ENCODE measurements at regions of chrX and their contacts with region 1.

Region 1: DNA sequence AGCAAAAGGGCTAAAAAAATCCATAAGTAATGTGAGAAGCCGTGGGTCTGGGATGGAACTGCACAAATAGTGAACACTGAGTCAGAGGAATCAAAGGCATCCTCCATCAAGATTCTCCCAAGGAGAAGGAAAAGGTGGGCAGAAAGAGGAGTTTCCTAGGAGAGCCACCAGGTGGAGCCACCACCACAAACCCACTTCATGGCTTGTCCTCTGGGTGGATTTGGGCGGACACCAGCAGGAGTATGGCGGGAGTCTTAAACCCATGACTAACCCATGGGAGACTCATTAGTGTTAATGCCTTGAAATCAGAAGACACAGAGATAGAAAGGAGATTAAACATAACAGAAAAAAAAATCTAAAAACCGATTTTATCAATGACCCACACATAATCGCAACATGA is 147.7 kb downstream of the SH3KBP1 start:
- DNase-seq: peak; percentile 73
- ATAC-seq: peak; percentile 83
- H3K4me3 ChIP-seq: no peak overlapping the region
- H3K27ac ChIP-seq: no peak overlapping the region
- H3K4me1 ChIP-seq: no peaks in the 10 kb centered on the region
- H3K27me3 ChIP-seq: no peaks in the 10 kb centered on the region
- CTCF ChIP-seq: peak; percentile 72
- POLR2A ChIP-seq: no peak
- RAD21 ChIP-seq: peak; percentile 76

Region 2: GRCh38 chrX:19358526-19358925 is 381.2 kb before region 1 on chrX:
- CTCF ChIA-PET with region 1: no interaction called
- POLR2A ChIA-PET with region 1: no interaction called
- dilution Hi-C with region 1: no loop called
- in situ Hi-C with region 1: no loop called
- intact Hi-C with region 1: no loop called
- DNase-seq: no peak
- ATAC-seq: no peak
- H3K4me3 ChIP-seq: no peak overlapping the region
- H3K27ac ChIP-seq: no peak overlapping the region
- H3K4me1 ChIP-seq: no peaks in the 10 kb centered on the region
- H3K27me3 ChIP-seq: no peaks in the 10 kb centered on the region
- CTCF ChIP-seq: no peak
- POLR2A ChIP-seq: no peak
- RAD21 ChIP-seq: no peak

Region 3: DNA sequence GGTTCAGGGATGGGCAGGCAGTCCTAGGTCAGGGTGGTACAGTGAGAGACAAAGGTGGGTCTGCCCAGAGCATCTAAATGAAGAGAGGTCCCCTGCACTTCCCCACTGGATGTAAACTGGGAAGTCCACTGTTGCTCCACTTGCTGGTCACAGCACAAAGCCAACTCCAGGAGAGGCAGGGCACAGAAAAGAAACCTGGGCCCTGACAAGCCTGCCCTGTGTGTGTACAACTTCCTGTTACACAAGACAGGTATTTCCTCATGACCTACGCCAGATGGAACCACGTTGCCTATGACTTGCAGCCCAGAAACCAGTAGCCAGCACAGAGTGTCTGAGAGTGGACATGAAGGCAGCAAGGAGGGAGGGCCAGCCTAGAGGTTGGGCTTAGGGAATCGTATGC is 14.0 kb before region 1 on chrX:
- CTCF ChIA-PET with region 1: no interaction called
- POLR2A ChIA-PET with region 1: no interaction called
- dilution Hi-C with region 1: no loop called
- in situ Hi-C with region 1: no loop called
- intact Hi-C with region 1: no loop called
- DNase-seq: peak; percentile 12
- ATAC-seq: no peak
- H3K4me3 ChIP-seq: no peak overlapping the region
- H3K27ac ChIP-seq: no peak overlapping the region
- H3K4me1 ChIP-seq: peaks cover 3% of the 10 kb centered on the region; the same call in 1 of the 2 replicates
- H3K27me3 ChIP-seq: no peaks in the 10 kb centered on the region
- CTCF ChIP-seq: no peak
- POLR2A ChIP-seq: no peak
- RAD21 ChIP-seq: no peak

Region 4: GRCh38 chrX:19791562-19791961 is 51.9 kb after region 1 on chrX:
- CTCF ChIA-PET with region 1: no interaction called
- POLR2A ChIA-PET with region 1: interaction called, 12 read pairs
- dilution Hi-C with region 1: no loop called
- in situ Hi-C with region 1: no loop called
- intact Hi-C with region 1: no loop called
- DNase-seq: peak; percentile 25
- ATAC-seq: no peak
- H3K4me3 ChIP-seq: no peak overlapping the region
- H3K27ac ChIP-seq: no peak overlapping the region
- H3K4me1 ChIP-seq: no peaks in the 10 kb centered on the region
- H3K27me3 ChIP-seq: no peaks in the 10 kb centered on the region
- CTCF ChIP-seq: no peak
- POLR2A ChIP-seq: no peak
- RAD21 ChIP-seq: no peak

Region 5: GRCh38 chrX:19887911-19888879 is 148.5 kb after region 1 on chrX:
- CTCF ChIA-PET with region 1: no interaction called
- POLR2A ChIA-PET with region 1: no interaction called
- dilution Hi-C with region 1: no loop called
- in situ Hi-C with region 1: loop called (anchors 10 kb)
- intact Hi-C with region 1: loop called (anchors 1 kb)
- DNase-seq: peak; percentile 77
- ATAC-seq: peak; percentile 60
- H3K4me3 ChIP-seq: peak overlapping the region; percentile 56
- H3K27ac ChIP-seq: peak overlapping the region; percentile 46
- H3K4me1 ChIP-seq: 0 out of 2 replicates have a peak, but pooled peaks cover 2% of the 10 kb centered on the region
- H3K27me3 ChIP-seq: no peaks in the 10 kb centered on the region
- CTCF ChIP-seq: peak; percentile 70
- POLR2A ChIP-seq: no peak
- RAD21 ChIP-seq: peak; percentile 76

Region 6: GRCh38 chrX:20171887-20172286 is 432.2 kb after region 1 on chrX:
- CTCF ChIA-PET with region 1: no interaction called
- POLR2A ChIA-PET with region 1: no interaction called
- dilution Hi-C with region 1: no loop called
- in situ Hi-C with region 1: no loop called
- intact Hi-C with region 1: no loop called
- DNase-seq: no peak
- ATAC-seq: no peak
- H3K4me3 ChIP-seq: no peak overlapping the region
- H3K27ac ChIP-seq: no peak overlapping the region
- H3K4me1 ChIP-seq: no peaks in the 10 kb centered on the region
- H3K27me3 ChIP-seq: no peaks in the 10 kb centered on the region
- CTCF ChIP-seq: no peak
- POLR2A ChIP-seq: no peak
- RAD21 ChIP-seq: no peak

Region 7: GRCh38 chrX:20294957-20295356 is 555.3 kb after region 1 on chrX:
- CTCF ChIA-PET with region 1: no interaction called
- POLR2A ChIA-PET with region 1: no interaction called
- dilution Hi-C with region 1: no loop called
- in situ Hi-C with region 1: no loop called
- intact Hi-C with region 1: no loop called
- DNase-seq: no peak
- ATAC-seq: no peak
- H3K4me3 ChIP-seq: no peak overlapping the region
- H3K27ac ChIP-seq: no peak overlapping the region
- H3K4me1 ChIP-seq: no peaks in the 10 kb centered on the region
- H3K27me3 ChIP-seq: peaks cover 3% of the 10 kb centered on the region
- CTCF ChIP-seq: no peak
- POLR2A ChIP-seq: no peak
- RAD21 ChIP-seq: no peak

Measured in IMR-90 (cell line).